ENCODE measurements at regions of chr12 and their contacts with region 1.

Region 1: GRCh38 chr12:56987551-56988053 is 18.7 kb downstream of the ZBTB39 start:
- DNase-seq: peak; percentile 85
- ATAC-seq: peak; percentile 45
- H3K4me3 ChIP-seq: no peak overlapping the region
- H3K27ac ChIP-seq: no peak overlapping the region
- H3K4me1 ChIP-seq: peaks cover 17% of the 10 kb centered on the region
- H3K27me3 ChIP-seq: no peaks in the 10 kb centered on the region
- CTCF ChIP-seq: peak; percentile 94

Region 2: DNA sequence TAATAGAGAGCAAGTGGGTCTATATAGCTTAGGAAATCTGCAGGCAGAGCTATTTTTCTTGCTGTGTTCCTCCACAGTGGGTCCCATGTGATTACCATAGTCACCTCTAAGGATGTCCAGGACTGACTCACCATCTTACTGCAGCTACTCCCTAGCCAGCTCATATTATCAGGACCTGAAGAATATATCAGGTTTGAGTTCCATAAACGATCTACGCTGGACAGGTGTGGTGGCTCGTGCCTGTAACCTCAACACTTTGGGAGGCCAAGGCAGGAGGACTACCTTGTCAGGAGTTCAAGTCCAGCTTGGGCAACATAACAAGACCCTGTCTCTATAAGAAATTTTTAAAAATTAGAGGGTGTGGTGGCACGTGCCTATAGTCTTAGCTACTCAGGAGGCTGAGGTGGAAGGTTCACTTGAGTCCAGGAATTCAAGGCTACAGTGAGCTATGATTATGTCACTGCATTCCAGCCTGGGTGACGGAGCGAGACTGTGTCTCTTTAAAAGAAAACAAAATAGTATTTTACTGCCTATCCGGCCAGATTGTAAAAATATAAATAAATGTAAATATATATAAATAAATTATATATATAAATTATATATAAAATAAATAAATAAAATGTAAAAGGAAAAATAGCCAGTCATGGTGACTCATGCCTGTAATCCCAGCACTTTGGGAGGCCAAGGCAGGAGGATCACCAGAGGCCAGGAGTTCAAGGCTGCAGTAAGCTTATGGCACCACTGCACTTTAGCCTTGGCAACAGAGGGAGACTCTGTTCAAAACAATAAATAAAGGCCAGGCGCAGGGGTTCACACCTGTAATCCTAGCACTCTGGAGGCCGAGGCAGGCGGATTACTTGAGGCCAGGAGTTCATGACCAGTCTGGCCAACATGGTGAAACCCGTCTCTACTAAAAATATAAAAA is 526.1 kb before region 1 on chr12:
- CTCF ChIA-PET with region 1: no interaction called
- POLR2A ChIA-PET with region 1: no interaction called
- intact Hi-C with region 1: no loop called
- DNase-seq: peak; percentile 65
- ATAC-seq: peak; percentile 88
- H3K4me3 ChIP-seq: no peak overlapping the region; the same call in 1 of the 2 replicates
- H3K27ac ChIP-seq: peak overlapping the region; percentile 3; the same call in 1 of the 2 replicates
- H3K4me1 ChIP-seq: peaks cover 11% of the 10 kb centered on the region
- H3K27me3 ChIP-seq: no peaks in the 10 kb centered on the region
- CTCF ChIP-seq: no peak

Region 3: GRCh38 chr12:56751712-56752598 is 235.6 kb before region 1 on chr12 and contains the start of gene PRIM1:
- CTCF ChIA-PET with region 1: interaction called, 3 read pairs
- POLR2A ChIA-PET with region 1: no interaction called
- intact Hi-C with region 1: loop called (anchors 1 kb)
- DNase-seq: peak; percentile 90
- ATAC-seq: peak; percentile 84
- H3K4me3 ChIP-seq: peak within 1 kb of the TSS; percentile 69
- H3K27ac ChIP-seq: peak within 1 kb of the TSS; percentile 47
- H3K4me1 ChIP-seq: peaks cover 7% of the 10 kb centered on the region
- H3K27me3 ChIP-seq: no peaks in the 10 kb centered on the region
- CTCF ChIP-seq: no peak
- total RNA-seq, gene PRIM1: 25.0 and 32.3 TPM in 2 replicates

Region 4: GRCh38 chr12:56763753-56764657 is 223.6 kb before region 1 on chr12:
- CTCF ChIA-PET with region 1: interaction called, 13 read pairs
- POLR2A ChIA-PET with region 1: no interaction called
- intact Hi-C with region 1: no loop called
- DNase-seq: peak; percentile 33
- ATAC-seq: peak; percentile 15; the same call in 1 of the 2 replicates
- H3K4me3 ChIP-seq: no peak overlapping the region
- H3K27ac ChIP-seq: no peak overlapping the region
- H3K4me1 ChIP-seq: peaks cover 5% of the 10 kb centered on the region
- H3K27me3 ChIP-seq: no peaks in the 10 kb centered on the region
- CTCF ChIP-seq: no peak

Region 5: DNA sequence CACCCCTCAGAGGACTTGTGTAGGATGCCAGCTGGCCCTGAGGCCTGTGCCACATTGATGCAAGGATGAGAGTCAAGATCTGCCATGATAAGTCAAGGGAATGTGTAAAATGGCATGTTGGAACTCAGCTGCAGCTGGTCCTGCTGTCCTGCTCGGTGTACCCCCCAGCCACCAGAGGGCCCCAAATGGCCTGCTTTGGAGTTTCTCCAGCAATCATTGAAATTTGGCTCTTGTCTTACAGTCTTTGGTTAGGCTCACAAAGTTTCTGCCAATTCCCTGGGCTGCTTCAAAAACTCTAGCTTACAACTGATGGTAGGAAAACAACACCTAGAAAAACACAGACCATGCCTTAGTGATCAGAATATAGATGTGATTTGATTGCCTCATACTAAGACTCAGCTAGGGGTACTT is 147.7 kb before region 1 on chr12:
- CTCF ChIA-PET with region 1: interaction called, 4 read pairs
- POLR2A ChIA-PET with region 1: no interaction called
- intact Hi-C with region 1: loop called (anchors 1 kb)
- DNase-seq: peak; percentile 60
- ATAC-seq: peak; percentile 54; the same call in 1 of the 2 replicates
- H3K4me3 ChIP-seq: no peak overlapping the region
- H3K27ac ChIP-seq: no peak overlapping the region
- H3K4me1 ChIP-seq: no peaks in the 10 kb centered on the region
- H3K27me3 ChIP-seq: no peaks in the 10 kb centered on the region
- CTCF ChIP-seq: peak; percentile 75

Region 6: GRCh38 chr12:56947633-56948456 is 39.8 kb before region 1 on chr12:
- CTCF ChIA-PET with region 1: no interaction called
- POLR2A ChIA-PET with region 1: no interaction called
- intact Hi-C with region 1: loop called (anchors 1 kb)
- DNase-seq: peak; percentile 57
- ATAC-seq: peak; percentile 42; the same call in 1 of the 2 replicates
- H3K4me3 ChIP-seq: no peak overlapping the region
- H3K27ac ChIP-seq: no peak overlapping the region
- H3K4me1 ChIP-seq: peaks cover 8% of the 10 kb centered on the region
- H3K27me3 ChIP-seq: no peaks in the 10 kb centered on the region
- CTCF ChIP-seq: peak; percentile 51

Measured in PC-3 (cell line).